ENCODE measurements at regions of chr5 and their contacts with region 1.

Region 1: DNA sequence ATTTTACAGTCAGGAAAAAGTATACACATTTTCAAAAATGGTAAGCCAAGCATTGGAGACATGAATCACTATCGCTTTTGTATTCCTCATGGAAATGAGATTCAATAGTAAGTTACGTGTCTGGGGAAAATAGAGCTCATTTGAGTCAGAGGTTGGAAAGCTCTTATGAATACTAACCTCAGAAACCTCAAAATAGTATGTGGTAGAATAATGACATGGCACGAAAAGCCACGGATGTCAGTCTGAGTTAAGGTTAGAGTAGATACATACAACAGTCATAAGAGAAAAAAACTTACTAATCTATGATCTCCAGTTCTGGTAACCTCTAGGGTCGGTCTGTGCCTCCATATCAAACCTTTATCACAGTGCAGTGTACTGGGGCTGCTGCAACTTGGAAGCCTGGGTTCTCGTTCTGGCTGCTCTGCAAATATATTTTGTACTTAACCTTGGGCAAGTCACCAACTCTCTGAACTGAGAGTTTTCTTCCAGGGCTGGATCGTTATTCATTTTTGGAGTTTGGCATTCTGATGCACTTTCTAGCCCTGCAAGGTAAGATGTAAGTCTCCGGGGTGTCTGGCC is 31.8 kb downstream of the MAP1B start:
- DNase-seq: peak; percentile 88
- ATAC-seq: peak; percentile 68
- H3K4me3 ChIP-seq: peak overlapping the region; percentile 42
- H3K27ac ChIP-seq: peak overlapping the region; percentile 86
- H3K4me1 ChIP-seq: peaks cover 67% of the 10 kb centered on the region
- H3K27me3 ChIP-seq: no peaks in the 10 kb centered on the region
- CTCF ChIP-seq: no peak

Region 2: DNA sequence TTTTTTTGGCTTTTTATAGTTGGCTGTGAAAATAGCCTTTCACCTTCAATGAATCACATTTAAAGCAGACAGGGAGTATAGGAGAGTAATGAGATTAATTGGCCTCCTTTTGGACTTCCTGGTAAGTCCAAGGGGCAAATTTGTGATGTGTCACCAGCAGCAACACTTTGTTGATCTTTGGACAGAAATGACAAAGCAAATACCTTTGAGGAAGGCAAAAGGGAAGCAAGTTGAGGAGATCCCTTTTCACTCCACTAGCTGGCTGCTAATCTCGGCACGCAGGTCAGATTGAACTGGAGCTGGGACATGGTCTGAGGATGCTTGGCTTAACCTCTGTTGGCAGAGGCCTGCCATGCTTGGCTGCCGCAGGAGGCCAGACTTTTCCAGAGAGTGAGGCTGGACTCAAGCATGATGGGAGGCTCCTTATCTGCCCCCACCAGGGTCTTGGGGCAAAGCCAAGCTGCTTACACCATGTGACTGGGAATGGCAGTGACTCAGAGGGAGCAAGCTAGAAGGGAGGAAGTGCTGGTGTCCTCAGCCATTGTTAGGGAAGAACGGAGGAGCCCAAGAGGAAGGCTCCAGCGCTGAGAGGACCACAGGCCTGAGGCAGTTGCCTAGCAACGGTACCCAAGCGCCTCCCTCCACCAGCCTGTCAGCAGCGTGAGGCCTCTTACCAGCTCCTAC is 206.2 kb before region 1 on chr5:
- CTCF ChIA-PET with region 1: no interaction called
- POLR2A ChIA-PET with region 1: no interaction called
- intact Hi-C with region 1: loop called (anchors 10 kb)
- DNase-seq: peak; percentile 80
- ATAC-seq: peak; percentile 88
- H3K4me3 ChIP-seq: no peak overlapping the region
- H3K27ac ChIP-seq: peak overlapping the region; percentile 93
- H3K4me1 ChIP-seq: peaks cover 25% of the 10 kb centered on the region
- H3K27me3 ChIP-seq: no peaks in the 10 kb centered on the region
- CTCF ChIP-seq: no peak

Region 3: DNA sequence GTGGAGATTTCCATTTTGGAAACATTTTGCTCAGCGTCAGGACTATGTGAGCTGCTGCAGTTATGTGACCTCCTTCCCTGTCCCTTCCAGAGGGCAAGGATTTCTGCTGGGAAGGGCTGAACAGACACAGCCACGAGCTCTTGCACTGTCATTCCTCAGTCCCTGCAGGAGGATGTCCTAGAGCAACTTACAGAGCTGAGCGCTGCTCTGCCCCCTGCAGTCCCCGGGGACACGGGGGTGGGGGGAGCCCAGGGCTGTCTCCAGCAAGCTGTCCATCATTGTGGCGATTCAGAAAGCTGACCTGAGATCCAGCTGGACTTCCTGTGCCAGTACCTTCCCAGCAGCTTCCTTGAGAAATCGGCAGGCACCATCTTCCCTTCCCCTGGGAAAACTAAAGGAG is 59.7 kb before region 1 on chr5:
- CTCF ChIA-PET with region 1: no interaction called
- POLR2A ChIA-PET with region 1: no interaction called
- intact Hi-C with region 1: no loop called
- DNase-seq: no peak
- ATAC-seq: no peak
- H3K4me3 ChIP-seq: no peak overlapping the region
- H3K27ac ChIP-seq: no peak overlapping the region
- H3K4me1 ChIP-seq: no peaks in the 10 kb centered on the region
- H3K27me3 ChIP-seq: no peaks in the 10 kb centered on the region
- CTCF ChIP-seq: no peak

Region 4: GRCh38 chr5:72268753-72269410 is 129.8 kb after region 1 on chr5:
- CTCF ChIA-PET with region 1: no interaction called
- POLR2A ChIA-PET with region 1: no interaction called
- intact Hi-C with region 1: loop called (anchors 5 kb)
- DNase-seq: peak; percentile 70
- ATAC-seq: no peak
- H3K4me3 ChIP-seq: no peak overlapping the region
- H3K27ac ChIP-seq: no peak overlapping the region
- H3K4me1 ChIP-seq: peaks cover 6% of the 10 kb centered on the region
- H3K27me3 ChIP-seq: no peaks in the 10 kb centered on the region
- CTCF ChIP-seq: peak; percentile 75

Region 5: GRCh38 chr5:72307968-72308852 is 169.2 kb after region 1 on chr5:
- CTCF ChIA-PET with region 1: interaction called, 9 read pairs
- POLR2A ChIA-PET with region 1: interaction called, 3 read pairs
- intact Hi-C with region 1: loop called (anchors 1 kb)
- DNase-seq: peak; percentile 95
- ATAC-seq: peak; percentile 98
- H3K4me3 ChIP-seq: peak overlapping the region; percentile 79
- H3K27ac ChIP-seq: peak overlapping the region; percentile 91
- H3K4me1 ChIP-seq: peaks cover 9% of the 10 kb centered on the region
- H3K27me3 ChIP-seq: no peaks in the 10 kb centered on the region
- CTCF ChIP-seq: peak; percentile 78

Measured in PC-3 (cell line).